ENCODE measurements at regions of chr17 and their contacts with region 1.

Region 1: DNA sequence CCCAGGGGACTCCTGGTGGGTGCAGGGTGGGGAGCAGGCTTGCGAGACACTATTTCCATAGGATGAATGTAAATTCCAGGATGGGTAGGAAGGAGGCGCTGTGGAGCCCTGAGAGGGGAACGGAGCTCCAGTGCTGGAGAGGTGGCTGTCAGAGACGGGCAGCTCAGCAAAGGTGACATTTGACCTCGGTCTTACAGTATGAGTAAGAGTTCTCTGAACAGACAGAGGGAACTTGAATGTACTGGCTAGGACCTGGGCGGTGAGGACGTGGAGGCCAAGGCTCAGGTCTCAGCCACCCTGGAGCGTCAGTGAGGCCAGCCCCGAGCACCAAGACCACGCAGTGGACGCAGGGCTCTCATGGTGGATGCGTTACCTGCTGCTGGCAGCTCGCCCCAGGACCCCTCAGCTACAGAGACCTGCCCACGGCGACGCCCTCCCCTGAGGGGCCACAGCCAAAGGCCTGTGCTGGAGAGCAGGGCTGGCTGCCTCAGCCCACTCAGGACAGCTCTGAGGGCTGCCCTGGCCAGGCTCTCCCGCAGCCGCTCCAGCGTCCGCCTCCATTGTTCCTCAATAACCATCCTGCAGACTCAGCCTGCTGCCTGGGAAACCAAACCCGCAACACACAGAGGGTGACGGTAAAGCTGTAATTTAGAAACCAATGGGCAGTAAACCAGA is 65.9 kb upstream of the TNRC6C start:
- DNase-seq: peak; percentile 21
- ATAC-seq: peak; percentile 90
- H3K4me3 ChIP-seq: no peak overlapping the region
- H3K27ac ChIP-seq: no peak overlapping the region
- H3K4me1 ChIP-seq: peaks cover 0 to 7% of the 10 kb centered on the region in 2 experiments; a peak in 1 of 4 replicates
- H3K27me3 ChIP-seq: peaks cover 17% of the 10 kb centered on the region; the same call in 1 of the 2 replicates
- CTCF ChIP-seq: peak in 2 of 3 experiments; percentile 85 to 96; a peak in 4 of 6 replicates
- POLR2A ChIP-seq: no peak
- RAD21 ChIP-seq: no peak

Region 2: DNA sequence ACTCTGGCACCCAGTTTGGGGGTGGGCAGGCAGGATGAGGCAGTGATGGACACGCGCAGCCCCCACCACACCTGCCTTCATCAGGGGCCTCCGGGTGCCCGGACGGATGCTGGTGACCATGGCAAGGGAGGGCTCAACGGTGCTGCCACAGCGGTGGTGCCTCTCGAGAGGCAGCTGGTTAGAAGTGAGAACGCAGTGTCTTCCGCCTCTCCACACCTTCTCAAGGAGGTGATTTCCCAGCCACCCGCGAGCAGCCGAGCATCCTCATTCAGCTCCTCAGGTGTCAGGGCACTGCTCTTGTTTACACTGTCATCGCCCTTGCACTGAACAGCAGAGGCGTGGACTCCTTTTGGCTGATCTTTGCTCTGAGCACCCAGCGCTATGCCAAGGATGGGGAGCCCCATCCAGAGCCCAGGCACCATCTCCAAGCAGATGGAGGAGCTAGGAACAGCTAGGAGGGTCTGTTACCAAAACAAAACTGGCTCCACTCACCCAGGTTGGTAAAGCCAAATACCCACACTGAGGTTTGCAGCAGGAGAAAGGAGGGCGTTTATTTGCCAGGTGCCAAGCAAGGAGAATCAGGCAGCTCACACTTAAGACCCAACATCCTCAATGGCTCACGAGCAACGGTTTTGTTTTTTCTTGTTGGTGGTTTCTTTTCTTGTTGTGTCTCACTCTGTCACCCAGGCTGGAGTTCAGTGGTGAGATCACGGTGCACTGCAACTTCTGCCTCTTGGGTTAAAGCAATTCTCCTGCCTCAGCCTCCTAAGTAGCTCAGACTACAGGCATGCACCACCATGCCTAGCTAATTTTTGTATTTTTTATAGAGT is 108.4 kb before region 1 on chr17:
- CTCF ChIA-PET with region 1: no interaction called
- POLR2A ChIA-PET with region 1: no interaction called
- RAD21 ChIA-PET with region 1: no interaction called
- intact Hi-C with region 1: no loop called
- DNase-seq: no peak
- ATAC-seq: no peak
- H3K4me3 ChIP-seq: no peak overlapping the region
- H3K27ac ChIP-seq: no peak overlapping the region
- H3K4me1 ChIP-seq: no peaks in the 10 kb centered on the region
- H3K27me3 ChIP-seq: peaks cover 12% of the 10 kb centered on the region; the same call in 1 of the 2 replicates
- CTCF ChIP-seq: no peak
- POLR2A ChIP-seq: no peak
- RAD21 ChIP-seq: no peak

Region 3: GRCh38 chr17:77842528-77843147 is 50.0 kb before region 1 on chr17:
- CTCF ChIA-PET with region 1: no interaction called
- POLR2A ChIA-PET with region 1: no interaction called
- RAD21 ChIA-PET with region 1: no interaction called
- intact Hi-C with region 1: no loop called
- DNase-seq: no peak
- ATAC-seq: peak; percentile 65
- H3K4me3 ChIP-seq: no peak overlapping the region
- H3K27ac ChIP-seq: no peak overlapping the region
- H3K4me1 ChIP-seq: peaks cover 9 to 26% of the 10 kb centered on the region in 2 experiments
- H3K27me3 ChIP-seq: no peaks in the 10 kb centered on the region
- CTCF ChIP-seq: no peak
- POLR2A ChIP-seq: no peak
- RAD21 ChIP-seq: no peak

Region 4: DNA sequence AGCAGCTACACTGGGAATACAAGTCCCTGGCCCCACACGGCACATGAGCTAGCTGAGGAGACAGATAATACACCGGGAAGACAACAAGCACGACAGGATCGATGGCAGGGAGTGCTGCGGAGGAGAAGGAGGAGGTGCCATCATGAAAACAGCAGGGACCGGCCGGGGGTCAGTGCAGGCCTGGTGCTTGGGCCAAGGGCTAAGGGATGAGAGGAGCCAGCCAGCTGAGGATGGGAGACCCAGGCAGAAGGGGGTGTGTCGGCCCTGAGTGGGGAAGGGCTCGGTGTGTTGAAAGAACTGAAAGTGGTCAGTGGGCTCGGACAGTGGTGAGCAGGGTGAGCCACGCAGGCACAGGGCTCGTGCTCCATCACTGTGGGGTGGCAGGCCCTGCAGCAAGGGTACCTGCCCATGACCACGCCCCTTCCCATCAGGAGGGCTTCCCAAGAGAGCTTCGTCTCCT is 15.0 kb after region 1 on chr17:
- CTCF ChIA-PET with region 1: interaction called, 12 read pairs
- POLR2A ChIA-PET with region 1: no interaction called
- RAD21 ChIA-PET with region 1: no interaction called
- intact Hi-C with region 1: no loop called
- DNase-seq: no peak
- ATAC-seq: no peak
- H3K4me3 ChIP-seq: no peak overlapping the region
- H3K27ac ChIP-seq: no peak overlapping the region
- H3K4me1 ChIP-seq: no peaks in the 10 kb centered on the region
- H3K27me3 ChIP-seq: peaks cover 19% of the 10 kb centered on the region; the same call in 1 of the 2 replicates
- CTCF ChIP-seq: no peak
- POLR2A ChIP-seq: no peak
- RAD21 ChIP-seq: no peak

Measured in HCT116 (cell line).